Heart right ventricle (tissue), 16 donors: ENCODE measurements at regions of chr1 and their contacts with region 1.

Region 1: DNA sequence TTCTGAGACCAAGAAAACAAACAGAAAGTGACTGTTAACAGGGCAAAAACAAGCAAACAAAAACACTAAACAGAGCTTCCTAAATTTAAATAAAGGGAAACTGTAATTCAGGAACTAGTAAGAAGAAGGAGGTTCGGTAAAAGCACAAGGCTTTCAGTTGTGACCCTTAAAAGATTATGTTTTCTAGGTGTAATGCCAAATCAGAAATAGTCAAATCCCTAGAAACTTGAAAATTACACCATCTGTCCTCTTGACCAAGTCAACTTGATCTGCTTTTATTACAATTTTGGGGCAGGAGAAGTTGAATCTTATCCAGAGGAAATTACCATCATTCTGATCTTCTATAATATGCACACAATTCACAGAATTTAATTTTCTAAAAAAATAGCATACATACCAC is 754.0 kb upstream of the ADGRL4 start:
- DNase-seq: no peak
- ATAC-seq: no peak
- H3K4me3 ChIP-seq: no peak overlapping the region
- H3K27ac ChIP-seq: no peak overlapping the region
- H3K4me1 ChIP-seq: no peaks in the 10 kb centered on the region
- H3K27me3 ChIP-seq: no peaks in the 10 kb centered on the region
- CTCF ChIP-seq: no peak

Region 2: GRCh38 chr1:79595931-79596330 is 164.6 kb before region 1 on chr1:
- intact Hi-C with region 1: loop called in 1 of 10 experiments (anchors 2 kb)
- DNase-seq: no peak
- ATAC-seq: no peak
- H3K4me3 ChIP-seq: no peak overlapping the region
- H3K27ac ChIP-seq: no peak overlapping the region
- H3K4me1 ChIP-seq: no peaks in the 10 kb centered on the region
- H3K27me3 ChIP-seq: no peaks in the 10 kb centered on the region
- CTCF ChIP-seq: no peak